Posterior vena cava (tissue), 2 donors: ENCODE measurements at regions of chr10 and their contacts with region 1.

Region 1: GRCh38 chr10:12531305-12532220 is 182.2 kb downstream of the CAMK1D start:
- DNase-seq: no peak

Region 2: DNA sequence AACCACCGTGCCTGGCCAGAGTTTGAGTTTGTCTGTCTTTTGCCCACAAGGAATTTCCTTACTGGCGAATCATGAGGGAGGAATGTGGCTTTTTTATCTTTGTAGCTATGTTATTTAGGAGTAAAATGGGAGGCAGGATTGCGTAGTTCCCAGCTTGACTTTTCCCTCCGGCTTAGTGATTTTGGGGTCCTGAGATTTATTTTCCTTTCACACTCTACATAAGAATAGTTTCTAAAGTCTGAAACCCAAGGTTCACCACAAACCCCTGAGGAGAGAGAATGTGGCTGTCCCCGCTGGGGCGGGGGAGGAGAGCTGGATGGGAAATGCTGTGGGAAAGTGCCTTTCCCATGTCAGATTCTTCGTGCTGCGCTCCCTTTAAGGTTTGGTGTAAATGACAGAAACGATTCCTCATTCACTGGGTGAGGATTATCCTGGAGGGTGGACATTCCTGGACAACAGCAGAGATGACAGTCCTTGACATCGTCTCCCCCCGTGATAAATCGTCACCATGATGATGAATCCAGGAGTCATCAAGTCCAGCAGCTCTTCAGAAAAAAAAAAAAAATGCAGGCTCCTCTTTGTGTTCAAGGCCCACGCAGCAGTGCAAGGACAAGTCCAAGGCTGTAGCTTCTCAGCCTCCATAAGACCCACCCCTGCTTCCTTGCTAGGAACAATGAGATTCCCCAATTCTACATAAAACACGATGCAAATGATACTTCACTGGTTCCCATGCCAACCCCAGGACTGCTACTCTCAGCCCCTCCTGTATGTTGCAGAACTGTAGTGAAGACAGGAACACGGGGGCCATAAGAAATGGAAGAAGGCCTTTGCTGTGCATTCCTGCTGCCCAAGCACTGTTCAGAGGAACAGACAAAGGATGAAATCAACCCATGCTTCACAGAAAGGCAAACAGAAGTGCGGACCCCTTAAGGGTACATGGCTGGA is 236.9 kb after region 1 on chr10:
- intact Hi-C with region 1: loop called in 1 of 2 experiments (anchors 5 kb)
- DNase-seq: no peak